ENCODE measurements at regions of chr1 and their contacts with region 1.

Region 1: GRCh38 chr1:246002725-246003441 is 504.2 kb downstream of the SMYD3 start:
- DNase-seq: peak; percentile 90
- ATAC-seq: peak; percentile 46
- H3K4me3 ChIP-seq: no peak overlapping the region
- H3K27ac ChIP-seq: peak overlapping the region; percentile 29; the same call in 1 of the 2 replicates
- H3K4me1 ChIP-seq: peaks cover 17% of the 10 kb centered on the region
- H3K27me3 ChIP-seq: no peaks in the 10 kb centered on the region
- CTCF ChIP-seq: peak; percentile 92
- POLR2A ChIP-seq: 0 out of 2 replicates have a peak, but pooled peaks have one; percentile 49
- RAD21 ChIP-seq: peak; percentile 97

Region 2: DNA sequence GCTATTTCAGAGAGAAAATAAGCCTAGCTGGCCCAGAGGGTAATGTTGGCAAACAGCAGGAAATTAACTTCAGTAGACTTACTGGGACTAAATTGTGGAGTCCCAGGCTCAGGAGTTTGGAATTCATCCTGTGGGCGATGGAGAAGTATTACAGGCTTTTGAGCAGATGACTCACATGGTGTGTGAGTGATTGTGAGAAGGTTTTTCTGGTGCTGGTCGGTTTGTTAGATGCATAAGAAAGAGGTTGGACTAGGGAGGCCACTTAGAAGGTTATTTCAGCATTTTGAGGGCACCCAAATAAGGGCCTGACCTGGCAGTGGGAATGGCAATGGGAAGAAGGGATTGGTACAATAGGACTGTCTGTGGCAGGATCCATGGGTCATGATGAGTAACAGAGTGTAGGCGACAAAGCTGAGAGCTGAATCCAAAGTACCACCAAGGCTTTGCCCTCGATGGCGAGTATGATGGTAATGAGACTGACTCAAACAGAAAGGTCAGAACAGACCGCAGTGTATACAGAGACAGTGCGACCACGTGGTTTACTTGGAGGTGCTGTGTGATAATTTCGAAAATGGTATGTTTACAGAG is 917.3 kb before region 1 on chr1:
- CTCF ChIA-PET with region 1: no interaction called
- POLR2A ChIA-PET with region 1: no interaction called
- dilution Hi-C with region 1: no loop called
- in situ Hi-C with region 1: loop called (anchors 10 kb)
- intact Hi-C with region 1: no loop called
- DNase-seq: peak; percentile 97
- ATAC-seq: peak; percentile 91
- H3K4me3 ChIP-seq: no peak overlapping the region
- H3K27ac ChIP-seq: peak overlapping the region; percentile 85
- H3K4me1 ChIP-seq: peaks cover 12% of the 10 kb centered on the region
- H3K27me3 ChIP-seq: no peaks in the 10 kb centered on the region
- CTCF ChIP-seq: peak; percentile 11; the same call in 1 of the 2 replicates
- POLR2A ChIP-seq: no peak; the same call in 1 of the 2 replicates
- RAD21 ChIP-seq: no peak

Region 3: DNA sequence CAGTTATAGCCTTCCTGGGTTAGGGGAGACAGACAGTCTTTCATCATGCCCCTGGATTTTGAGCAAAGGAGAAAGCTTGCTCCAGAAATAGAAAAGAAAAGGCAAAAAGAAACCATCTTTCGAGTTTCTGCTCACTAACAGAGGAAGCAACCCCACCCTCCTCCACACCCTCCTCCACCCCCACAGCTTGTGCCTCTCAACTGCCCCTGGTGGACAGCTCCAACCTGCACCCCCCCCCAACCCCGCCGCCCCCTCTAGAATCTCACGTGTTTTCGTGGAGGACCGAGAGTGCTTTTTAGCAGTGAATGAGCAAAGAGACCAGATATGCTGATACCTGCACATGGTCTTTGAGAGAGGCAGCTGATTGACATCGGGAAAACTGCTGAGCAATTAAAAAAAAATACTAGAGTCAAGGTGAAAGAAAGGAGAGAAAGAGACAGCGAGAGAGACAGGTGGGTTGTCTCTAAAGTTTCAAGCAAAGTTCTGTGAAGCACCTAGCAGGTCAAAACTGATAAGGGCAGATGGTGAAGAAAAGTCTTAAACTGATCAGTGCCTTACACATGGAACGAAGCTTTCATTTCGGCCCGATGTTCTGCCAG is 489.8 kb before region 1 on chr1:
- CTCF ChIA-PET with region 1: no interaction called
- POLR2A ChIA-PET with region 1: no interaction called
- dilution Hi-C with region 1: no loop called
- in situ Hi-C with region 1: loop called (anchors 10 kb)
- intact Hi-C with region 1: loop called (anchors 1 kb)
- DNase-seq: no peak
- ATAC-seq: no peak
- H3K4me3 ChIP-seq: no peak overlapping the region
- H3K27ac ChIP-seq: no peak overlapping the region
- H3K4me1 ChIP-seq: peaks cover 2% of the 10 kb centered on the region; the same call in 1 of the 2 replicates
- H3K27me3 ChIP-seq: no peaks in the 10 kb centered on the region
- CTCF ChIP-seq: no peak
- POLR2A ChIP-seq: no peak
- RAD21 ChIP-seq: no peak

Region 4: GRCh38 chr1:245788269-245788668 is 214.6 kb before region 1 on chr1:
- CTCF ChIA-PET with region 1: no interaction called
- POLR2A ChIA-PET with region 1: interaction called, 4 read pairs
- dilution Hi-C with region 1: no loop called
- in situ Hi-C with region 1: no loop called
- intact Hi-C with region 1: loop called (anchors 5 kb)
- DNase-seq: peak; percentile 98
- ATAC-seq: peak; percentile 96
- H3K4me3 ChIP-seq: no peak overlapping the region
- H3K27ac ChIP-seq: peak overlapping the region; percentile 95
- H3K4me1 ChIP-seq: peaks cover 19% of the 10 kb centered on the region
- H3K27me3 ChIP-seq: no peaks in the 10 kb centered on the region
- CTCF ChIP-seq: no peak
- POLR2A ChIP-seq: no peak
- RAD21 ChIP-seq: no peak

Region 5: GRCh38 chr1:246091477-246091876 is 88.6 kb after region 1 on chr1:
- CTCF ChIA-PET with region 1: no interaction called
- POLR2A ChIA-PET with region 1: no interaction called
- dilution Hi-C with region 1: no loop called
- in situ Hi-C with region 1: no loop called
- intact Hi-C with region 1: no loop called
- DNase-seq: peak; percentile 2
- ATAC-seq: no peak
- H3K4me3 ChIP-seq: no peak overlapping the region
- H3K27ac ChIP-seq: no peak overlapping the region
- H3K4me1 ChIP-seq: no peaks in the 10 kb centered on the region
- H3K27me3 ChIP-seq: no peaks in the 10 kb centered on the region
- CTCF ChIP-seq: no peak
- POLR2A ChIP-seq: no peak
- RAD21 ChIP-seq: no peak

Region 6: DNA sequence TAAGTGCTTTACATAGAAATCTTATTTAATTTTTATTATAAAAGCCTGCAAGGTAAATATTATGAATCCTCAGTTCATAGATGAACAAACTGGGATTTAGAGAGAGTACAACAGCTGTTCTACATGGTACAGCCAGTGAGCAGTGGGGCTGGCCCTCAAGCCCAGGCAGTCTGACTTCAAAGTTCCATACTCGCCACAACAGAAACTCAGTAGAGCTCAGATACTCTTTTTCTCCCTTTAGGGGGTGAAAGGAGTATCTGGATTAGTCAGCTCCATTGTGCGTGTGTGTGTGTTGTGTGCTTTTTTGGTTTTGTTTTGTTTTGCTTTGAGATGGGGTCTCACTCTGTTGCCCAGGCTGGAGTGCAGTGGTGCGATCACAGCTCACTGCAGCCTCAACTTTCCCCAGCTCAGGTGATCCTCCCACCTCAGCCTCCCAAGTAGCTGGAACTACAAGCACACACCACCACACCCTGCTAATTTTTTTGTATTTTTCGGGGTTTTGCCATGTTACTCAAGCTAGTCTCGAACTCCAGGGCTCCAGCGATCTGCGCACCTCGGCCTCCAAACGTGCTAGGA is 125.7 kb after region 1 on chr1:
- CTCF ChIA-PET with region 1: no interaction called
- POLR2A ChIA-PET with region 1: no interaction called
- dilution Hi-C with region 1: no loop called
- in situ Hi-C with region 1: no loop called
- intact Hi-C with region 1: no loop called
- DNase-seq: no peak
- ATAC-seq: no peak
- H3K4me3 ChIP-seq: no peak overlapping the region
- H3K27ac ChIP-seq: no peak overlapping the region
- H3K4me1 ChIP-seq: no peaks in the 10 kb centered on the region
- H3K27me3 ChIP-seq: no peaks in the 10 kb centered on the region
- CTCF ChIP-seq: no peak
- POLR2A ChIP-seq: no peak
- RAD21 ChIP-seq: no peak

Region 7: DNA sequence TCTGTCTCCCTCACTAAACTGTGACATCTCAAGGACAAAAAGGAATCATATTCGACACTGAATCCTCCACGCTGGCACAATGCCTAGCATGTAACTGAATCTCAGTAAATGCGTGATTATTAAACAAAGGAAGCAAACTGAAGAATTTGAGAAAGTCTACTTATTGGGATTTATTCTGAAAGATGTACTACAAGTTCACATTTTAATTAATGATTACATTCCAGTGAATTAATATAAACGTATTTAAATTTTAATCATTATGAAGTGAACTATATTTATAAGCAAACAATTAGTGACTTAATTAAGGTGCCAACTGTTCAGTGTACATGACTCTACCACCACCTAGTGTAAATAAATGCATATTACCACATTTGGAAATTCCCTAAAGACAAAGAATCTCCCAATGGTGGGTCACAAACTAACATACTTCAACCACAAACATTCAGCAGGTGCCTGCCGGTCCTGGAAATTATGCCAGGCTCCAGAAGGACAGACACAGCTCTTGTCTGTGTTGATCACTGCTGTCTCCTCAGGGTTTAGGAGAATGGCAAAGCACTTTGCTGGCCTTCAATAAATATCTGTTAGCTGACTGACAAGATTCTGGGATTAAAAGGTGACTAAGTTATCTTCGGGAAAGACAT is 447.8 kb after region 1 on chr1:
- CTCF ChIA-PET with region 1: interaction called, 3 read pairs
- POLR2A ChIA-PET with region 1: no interaction called
- dilution Hi-C with region 1: no loop called
- in situ Hi-C with region 1: loop called (anchors 10 kb)
- intact Hi-C with region 1: loop called (anchors 2 kb)
- DNase-seq: peak; percentile 35
- ATAC-seq: peak; percentile 61
- H3K4me3 ChIP-seq: no peak overlapping the region
- H3K27ac ChIP-seq: no peak overlapping the region
- H3K4me1 ChIP-seq: peaks cover 2% of the 10 kb centered on the region
- H3K27me3 ChIP-seq: no peaks in the 10 kb centered on the region
- CTCF ChIP-seq: peak; percentile 82
- POLR2A ChIP-seq: no peak
- RAD21 ChIP-seq: peak; percentile 87

Measured in IMR-90 (cell line).